ENCODE measurements at regions of chr6 and their contacts with region 1.

Region 1: DNA sequence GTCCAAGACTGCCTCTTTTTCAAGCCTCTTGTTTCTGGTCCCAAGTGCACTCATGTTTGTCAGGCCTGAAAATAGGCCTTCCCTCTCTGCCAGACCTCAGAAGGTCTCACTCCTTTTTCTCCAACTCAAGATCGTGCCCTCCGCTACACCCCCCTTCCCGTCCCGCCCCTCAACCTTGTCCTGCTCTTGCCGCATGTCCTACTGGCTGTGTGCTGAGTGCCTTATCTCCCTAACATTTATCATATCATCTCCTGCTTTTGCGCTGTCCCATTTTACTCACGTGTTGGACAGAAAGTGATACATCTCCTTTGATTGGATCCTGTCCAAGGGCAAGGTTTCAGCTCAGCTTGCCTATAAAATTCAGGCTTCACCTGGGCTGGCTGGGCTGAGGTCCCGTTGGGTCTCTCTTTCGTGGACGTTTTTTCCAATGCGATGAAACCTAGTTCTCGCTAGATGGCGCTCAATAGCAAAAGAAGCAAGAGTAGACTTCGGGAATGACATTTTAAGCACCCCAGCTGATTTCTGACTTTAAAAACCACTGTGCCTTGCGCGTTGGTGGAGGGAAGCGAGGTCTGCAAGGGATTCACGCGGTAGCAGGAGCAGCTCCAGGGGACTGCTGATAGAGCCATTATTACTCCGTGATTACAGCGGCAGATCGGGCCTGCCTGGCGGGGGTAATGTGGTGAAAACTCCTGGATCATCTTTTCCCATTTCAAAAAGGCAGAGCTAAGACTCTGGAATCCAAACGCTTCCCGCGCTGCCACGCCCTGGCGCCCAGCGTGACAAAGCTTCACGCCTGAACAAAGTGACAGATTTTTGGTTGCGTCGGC is 137.6 kb downstream of the IMPG1 start:
- DNase-seq: peak; percentile 57
- H3K4me3 ChIP-seq: peak overlapping the region; percentile 25 to 44 (median 43)
- H3K27ac ChIP-seq: no peak overlapping the region
- H3K4me1 ChIP-seq: peaks cover 6% of the 10 kb centered on the region
- H3K27me3 ChIP-seq: no peaks in the 10 kb centered on the region
- CTCF ChIP-seq: peak; percentile 66 to 83

Region 2: DNA sequence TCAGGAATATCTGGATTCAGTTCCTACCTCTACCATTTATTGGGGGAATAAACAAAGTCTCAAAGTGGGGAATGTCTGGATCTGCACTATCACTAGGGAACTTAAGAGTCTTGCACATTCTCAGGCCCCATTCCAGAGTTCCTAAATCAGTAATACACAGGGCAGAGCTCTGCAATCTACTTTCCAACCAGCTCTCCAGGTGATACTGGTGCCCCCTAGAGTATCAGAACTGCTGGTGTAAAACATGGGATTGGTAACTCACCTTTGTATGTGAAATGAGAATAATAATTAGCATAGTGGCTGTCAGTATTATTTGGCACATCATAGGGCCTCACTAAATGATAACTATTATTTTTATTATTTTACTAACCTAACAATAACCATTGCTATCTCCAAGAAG is 416.4 kb after region 1 on chr6:
- CTCF ChIA-PET with region 1: interaction called, 5 read pairs
- dilution Hi-C with region 1: no loop called
- in situ Hi-C with region 1: no loop called
- intact Hi-C with region 1: loop called (anchors 1 kb)
- DNase-seq: peak; percentile 6
- H3K4me3 ChIP-seq: no peak overlapping the region
- H3K27ac ChIP-seq: no peak overlapping the region
- H3K4me1 ChIP-seq: no peaks in the 10 kb centered on the region
- H3K27me3 ChIP-seq: no peaks in the 10 kb centered on the region
- CTCF ChIP-seq: peak in 1 of 2 donors; percentile 29

Region 3: GRCh38 chr6:76682842-76683241 is 748.0 kb after region 1 on chr6:
- CTCF ChIA-PET with region 1: interaction called, 4 read pairs
- dilution Hi-C with region 1: no loop called
- in situ Hi-C with region 1: no loop called
- intact Hi-C with region 1: loop called (anchors 5 kb)
- DNase-seq: no peak
- H3K4me3 ChIP-seq: no peak overlapping the region
- H3K27ac ChIP-seq: no peak overlapping the region
- H3K4me1 ChIP-seq: no peaks in the 10 kb centered on the region
- H3K27me3 ChIP-seq: no peaks in the 10 kb centered on the region
- CTCF ChIP-seq: peak; percentile 34 to 41